PC-3 (cell line): ENCODE measurements at regions of chr6 and their contacts with region 1.

Region 1: DNA sequence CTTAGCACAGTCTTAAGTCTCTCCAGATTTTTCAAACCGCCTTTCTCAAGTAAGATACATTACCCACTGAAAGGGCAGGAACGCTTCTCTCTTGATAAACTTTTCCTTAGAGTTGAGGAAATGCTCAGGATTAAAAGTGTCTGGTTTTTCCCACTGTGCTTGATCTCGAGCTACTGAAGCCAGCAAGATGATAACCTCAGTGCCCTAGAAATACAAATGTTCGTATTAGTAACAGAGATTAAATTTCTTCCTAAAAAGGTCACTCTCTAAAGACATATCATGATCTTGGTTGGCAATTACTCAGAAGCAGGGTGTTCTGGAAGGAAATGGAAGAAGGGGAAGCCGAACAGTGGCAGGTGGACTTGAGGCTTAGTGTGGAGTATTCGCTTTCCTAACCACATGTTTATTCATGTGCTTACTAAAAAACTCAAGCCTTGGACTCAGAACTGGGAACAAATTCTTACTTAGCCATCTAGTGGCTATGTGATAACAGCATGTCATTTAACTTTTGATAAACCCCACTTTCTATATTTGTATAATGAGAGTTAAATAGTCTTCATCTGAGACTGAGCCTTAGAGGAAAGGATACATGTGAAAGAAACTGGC is 20.1 kb downstream of the C6orf141 start:
- DNase-seq: peak; percentile 66
- ATAC-seq: peak; percentile 51
- H3K4me3 ChIP-seq: no peak overlapping the region
- H3K27ac ChIP-seq: no peak overlapping the region
- H3K4me1 ChIP-seq: peaks cover 17% of the 10 kb centered on the region
- H3K27me3 ChIP-seq: no peaks in the 10 kb centered on the region
- CTCF ChIP-seq: peak; percentile 69

Region 2: DNA sequence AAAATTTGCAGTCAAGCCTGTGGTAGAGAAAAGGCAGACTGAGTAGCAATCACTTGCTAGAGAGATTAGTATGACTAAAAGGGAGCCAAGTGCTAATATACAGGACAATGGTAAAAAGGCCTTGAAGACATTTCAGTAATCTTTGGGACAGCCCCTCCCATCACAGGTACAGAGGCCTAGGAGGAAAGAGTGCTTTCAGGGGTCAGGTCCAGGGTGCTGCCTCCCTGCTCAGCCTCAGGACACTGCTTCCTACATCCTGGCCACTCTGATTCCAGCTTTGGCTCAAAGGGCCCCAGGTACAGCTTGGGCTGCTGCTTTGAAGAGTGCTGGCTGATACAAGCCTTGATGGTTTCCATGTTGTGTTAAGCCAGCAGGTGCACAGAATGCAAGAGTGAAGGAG is 651.0 kb before region 1 on chr6:
- CTCF ChIA-PET with region 1: no interaction called
- POLR2A ChIA-PET with region 1: no interaction called
- intact Hi-C with region 1: no loop called
- DNase-seq: no peak
- ATAC-seq: no peak
- H3K4me3 ChIP-seq: no peak overlapping the region
- H3K27ac ChIP-seq: no peak overlapping the region
- H3K4me1 ChIP-seq: peaks cover 34% of the 10 kb centered on the region
- H3K27me3 ChIP-seq: no peaks in the 10 kb centered on the region
- CTCF ChIP-seq: no peak

Region 3: GRCh38 chr6:49550492-49551077 is 20.0 kb before region 1 on chr6 and contains the start of gene C6orf141:
- CTCF ChIA-PET with region 1: interaction called, 8 read pairs
- POLR2A ChIA-PET with region 1: interaction called, 5 read pairs
- intact Hi-C with region 1: loop called (anchors 2 kb)
- DNase-seq: peak; percentile 94
- ATAC-seq: peak; percentile 87
- H3K4me3 ChIP-seq: peak within 1 kb of the TSS; percentile 90
- H3K27ac ChIP-seq: peak within 1 kb of the TSS; percentile 74
- H3K4me1 ChIP-seq: peaks cover 35% of the 10 kb centered on the region
- H3K27me3 ChIP-seq: no peaks in the 10 kb centered on the region
- CTCF ChIP-seq: no peak
- total RNA-seq, gene C6orf141: 43.8 and 49.4 TPM in 2 replicates